MCF 10A (cell line): ENCODE measurements at regions of chr5 and their contacts with region 1.

Region 1: GRCh38 chr5:83265318-83265717 is 188.0 kb downstream of the XRCC4 start:
- DNase-seq: peak; percentile 71
- H3K4me3 Mint-ChIP-seq: no peak overlapping the region
- H3K27ac Mint-ChIP-seq: no peak overlapping the region
- H3K4me1 Mint-ChIP-seq: no peaks in the 10 kb centered on the region
- H3K27me3 Mint-ChIP-seq: no peaks in the 10 kb centered on the region
- CTCF ChIP-seq: no peak

Region 2: DNA sequence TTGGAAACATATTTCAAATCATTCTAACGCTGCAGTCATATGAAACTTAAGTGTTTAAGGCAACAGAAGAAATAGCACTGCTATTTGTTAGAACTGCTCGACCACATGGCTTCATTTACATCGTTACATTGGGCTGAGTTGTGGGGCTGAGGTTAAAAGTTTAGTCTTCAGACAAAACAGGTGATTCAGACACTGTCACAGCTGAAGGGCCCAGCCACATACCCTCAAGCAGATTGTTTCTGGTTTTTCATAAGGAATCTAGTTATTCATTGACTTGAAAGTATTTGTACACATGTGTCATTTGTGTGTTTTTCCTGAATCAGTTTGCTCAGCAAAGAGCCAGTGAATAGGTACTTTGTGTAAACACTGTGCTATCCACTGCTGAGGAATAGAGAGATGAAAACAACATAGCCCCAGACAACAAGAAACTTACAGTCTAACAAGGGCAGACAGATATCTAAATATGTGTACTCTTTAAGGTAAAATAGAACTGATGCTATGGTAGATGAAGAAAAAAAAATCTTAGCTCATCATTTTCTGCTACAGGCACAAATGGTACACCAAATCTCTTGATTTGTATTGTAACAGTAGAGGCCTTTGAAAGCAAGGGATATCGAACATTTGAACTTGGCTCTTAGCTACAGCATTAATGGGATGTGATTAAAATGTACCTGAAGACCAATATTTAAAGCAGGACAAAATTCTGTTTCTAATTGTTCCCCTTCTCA is 629.6 kb before region 1 on chr5:
- CTCF ChIA-PET with region 1: interaction called, 4 read pairs
- POLR2A ChIA-PET with region 1: no interaction called
- intact Hi-C with region 1: loop called (anchors 5 kb)
- DNase-seq: peak; percentile 8
- H3K4me3 Mint-ChIP-seq: no peak overlapping the region
- H3K27ac Mint-ChIP-seq: no peak overlapping the region
- H3K4me1 Mint-ChIP-seq: peaks cover 6% of the 10 kb centered on the region
- H3K27me3 Mint-ChIP-seq: no peaks in the 10 kb centered on the region
- CTCF ChIP-seq: no peak

Region 3: DNA sequence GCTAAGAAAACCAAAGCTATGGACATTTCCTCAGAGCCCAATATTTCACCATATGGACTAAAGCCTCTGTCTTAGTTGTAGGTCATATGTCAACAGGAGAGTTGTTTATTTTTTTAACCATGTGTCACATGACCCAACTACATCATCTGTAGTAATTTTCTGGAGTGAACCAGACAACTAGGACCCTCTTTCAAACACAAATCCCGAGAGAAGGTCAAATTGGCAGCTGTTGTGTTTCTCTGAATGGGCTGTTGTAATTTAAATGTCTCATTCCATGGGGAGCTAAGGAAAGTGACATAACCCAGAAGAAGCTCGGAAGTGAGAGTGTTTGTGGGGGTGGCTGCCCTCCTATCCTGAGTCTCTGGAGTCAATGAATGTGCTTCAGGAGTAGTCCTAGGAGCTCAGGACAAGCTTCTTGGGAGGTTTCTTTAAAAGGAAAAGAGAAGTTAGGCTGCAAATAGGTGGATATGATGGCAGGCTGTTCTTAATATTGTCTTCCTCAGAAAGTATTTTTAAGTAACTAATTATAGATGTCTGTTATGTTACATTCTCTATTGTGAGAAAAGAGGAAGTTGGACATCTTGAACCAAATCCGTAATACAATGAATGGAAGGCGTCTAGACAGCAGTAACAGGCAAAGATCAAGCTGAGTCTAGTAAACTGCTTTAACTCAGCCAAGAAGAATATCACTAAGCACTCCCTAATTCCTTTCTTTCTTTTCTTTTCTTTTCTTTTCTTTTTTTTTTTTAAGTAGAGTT is 238.2 kb before region 1 on chr5:
- CTCF ChIA-PET with region 1: no interaction called
- POLR2A ChIA-PET with region 1: no interaction called
- intact Hi-C with region 1: no loop called
- DNase-seq: no peak
- H3K4me3 Mint-ChIP-seq: no peak overlapping the region
- H3K27ac Mint-ChIP-seq: no peak overlapping the region
- H3K4me1 Mint-ChIP-seq: no peaks in the 10 kb centered on the region
- H3K27me3 Mint-ChIP-seq: no peaks in the 10 kb centered on the region
- CTCF ChIP-seq: no peak

Region 4: GRCh38 chr5:83441747-83442146 is 176.4 kb after region 1 on chr5:
- CTCF ChIA-PET with region 1: no interaction called
- POLR2A ChIA-PET with region 1: no interaction called
- intact Hi-C with region 1: no loop called
- DNase-seq: peak; percentile 17
- H3K4me3 Mint-ChIP-seq: no peak overlapping the region
- H3K27ac Mint-ChIP-seq: no peak overlapping the region
- H3K4me1 Mint-ChIP-seq: no peaks in the 10 kb centered on the region
- H3K27me3 Mint-ChIP-seq: no peaks in the 10 kb centered on the region
- CTCF ChIP-seq: no peak